Esophagus muscularis mucosa (tissue), 4 donors: ENCODE measurements at regions of chr2 and their contacts with region 1.

Region 1: DNA sequence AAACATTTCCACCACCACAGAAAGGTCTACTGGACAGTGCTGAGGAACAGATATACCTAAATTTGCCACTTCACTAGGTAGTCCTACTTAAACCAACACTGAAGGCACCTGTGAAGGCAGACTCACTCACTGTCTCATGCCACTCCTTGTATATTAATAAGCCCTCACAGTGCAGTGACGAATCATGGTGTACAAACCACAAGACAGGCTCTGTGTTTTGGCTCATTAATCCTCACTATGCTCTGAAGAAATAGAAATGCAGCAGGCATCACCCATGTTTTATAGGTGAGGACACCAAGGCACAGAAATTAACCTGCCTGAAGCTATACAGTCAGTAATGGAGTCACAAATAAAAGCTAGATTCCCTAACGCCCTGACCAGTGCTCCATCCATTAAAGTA is 44.3 kb downstream of the BARD1 start:
- DNase-seq: no peak
- H3K4me3 ChIP-seq: no peak overlapping the region
- H3K27ac ChIP-seq: no peak overlapping the region
- H3K4me1 ChIP-seq: no peaks in the 10 kb centered on the region
- H3K27me3 ChIP-seq: no peaks in the 10 kb centered on the region
- CTCF ChIP-seq: no peak
- EP300 ChIP-seq: no peak
- POLR2A ChIP-seq: no peak

Region 2: DNA sequence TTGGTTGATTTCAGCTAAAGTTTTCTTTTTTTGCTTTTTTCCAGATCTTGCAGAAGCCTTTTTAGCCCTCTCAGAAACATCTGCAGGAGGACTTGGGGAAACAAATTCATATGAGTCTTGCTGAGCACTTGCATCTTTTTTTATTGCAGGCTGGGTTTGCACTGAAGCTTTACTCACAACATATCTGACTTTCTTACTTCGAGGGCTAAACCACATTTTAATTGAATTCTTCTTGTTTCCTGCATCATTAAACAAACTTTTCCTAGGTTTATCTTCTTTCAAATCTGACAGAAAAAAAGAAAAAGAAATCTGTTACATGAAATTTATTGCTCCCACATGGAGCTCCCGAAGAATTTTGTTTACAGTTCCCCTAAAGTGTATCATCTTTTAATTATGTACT is 16.0 kb after region 1 on chr2:
- intact Hi-C with region 1: loop called (anchors 2 kb)
- DNase-seq: no peak
- H3K4me3 ChIP-seq: no peak overlapping the region
- H3K27ac ChIP-seq: no peak overlapping the region
- H3K4me1 ChIP-seq: no peaks in the 10 kb centered on the region
- H3K27me3 ChIP-seq: no peaks in the 10 kb centered on the region
- CTCF ChIP-seq: no peak
- EP300 ChIP-seq: no peak
- POLR2A ChIP-seq: no peak

Region 3: GRCh38 chr2:214843823-214844222 is 78.6 kb after region 1 on chr2:
- intact Hi-C with region 1: no loop called
- DNase-seq: no peak
- H3K4me3 ChIP-seq: no peak overlapping the region
- H3K27ac ChIP-seq: no peak overlapping the region
- H3K4me1 ChIP-seq: no peaks in the 10 kb centered on the region
- H3K27me3 ChIP-seq: no peaks in the 10 kb centered on the region
- CTCF ChIP-seq: no peak
- EP300 ChIP-seq: no peak
- POLR2A ChIP-seq: no peak